Naive thymus-derived CD4-positive, alpha-beta T cell (primary cell): ENCODE measurements at regions of chr11 and their contacts with region 1.

Region 1: DNA sequence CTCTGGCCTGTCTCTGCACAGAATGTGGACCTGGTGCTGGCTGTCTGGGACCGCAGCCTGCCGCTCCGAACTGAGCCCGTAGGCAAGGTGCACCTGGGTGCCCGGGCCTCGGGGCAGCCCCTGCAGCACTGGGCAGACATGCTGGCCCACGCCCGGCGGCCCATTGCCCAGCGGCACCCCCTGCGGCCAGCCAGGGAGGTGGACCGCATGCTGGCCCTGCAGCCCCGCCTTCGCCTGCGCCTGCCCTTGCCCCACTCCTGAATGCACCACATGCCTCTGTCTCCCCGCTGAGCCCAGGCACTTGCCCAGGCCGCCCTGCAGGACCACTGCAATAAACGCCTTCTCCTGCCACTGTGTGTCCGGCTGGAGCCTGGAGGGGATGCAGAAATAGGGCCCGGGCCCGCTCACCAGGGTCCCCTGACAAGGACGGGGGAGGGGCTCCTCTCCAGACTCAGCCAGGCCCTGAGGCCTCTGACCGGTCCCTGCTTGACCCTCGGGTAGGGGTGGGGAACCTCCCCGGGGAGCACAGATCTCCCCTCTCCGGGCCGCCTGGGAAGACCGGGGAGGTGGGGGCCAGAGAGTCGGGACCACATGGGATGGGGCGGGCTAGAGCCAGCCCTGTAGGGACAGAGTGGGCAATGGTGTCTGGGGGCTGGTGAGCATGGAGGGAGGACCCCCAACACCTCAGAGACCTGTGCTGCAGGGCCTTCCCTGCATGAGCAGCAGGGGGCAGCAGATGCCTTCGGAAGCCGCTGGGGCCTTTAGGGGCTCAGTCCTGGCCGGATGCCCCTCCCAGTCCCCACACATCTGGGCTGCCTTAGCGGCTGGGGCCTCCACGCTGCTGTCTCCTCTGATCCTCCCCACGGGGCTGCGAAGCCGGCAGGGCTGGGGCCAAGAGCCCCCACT is 1.4 kb upstream of the TNNI2 start:
- DNase-seq: peak; percentile 53 to 83 (median 75)
- ATAC-seq: peak; percentile 84
- H3K4me3 ChIP-seq: no peak overlapping the region
- H3K4me3 Mint-ChIP-seq: peak overlapping the region in 1 of 10 donors; percentile 14
- H3K27ac ChIP-seq: no peak overlapping the region
- H3K27ac Mint-ChIP-seq: peak overlapping the region in 1 of 9 donors; percentile 19
- H3K4me1 ChIP-seq: peaks cover 0 to 7% of the 10 kb centered on the region in 2 donors
- H3K4me1 Mint-ChIP-seq: peaks cover 0 to 11% (median 7%) of the 10 kb centered on the region in 7 donors
- H3K27me3 ChIP-seq: no peaks in the 10 kb centered on the region
- H3K27me3 Mint-ChIP-seq: peaks cover 0 to 3% (median 0%) of the 10 kb centered on the region in 5 donors

Region 2: GRCh38 chr11:1652771-1653540 is 184.5 kb before region 1 on chr11:
- CTCF ChIA-PET with region 1: interaction called, 37 read pairs
- POLR2A ChIA-PET with region 1: no interaction called
- intact Hi-C with region 1: loop called in 1 of 2 experiments (anchors 1 kb)
- DNase-seq: peak; percentile 54 to 87 (median 78)
- ATAC-seq: peak; percentile 93
- H3K4me3 ChIP-seq: no peak overlapping the region
- H3K4me3 Mint-ChIP-seq: no peak overlapping the region
- H3K27ac ChIP-seq: no peak overlapping the region
- H3K27ac Mint-ChIP-seq: no peak overlapping the region
- H3K4me1 ChIP-seq: no peaks in the 10 kb centered on the region
- H3K4me1 Mint-ChIP-seq: peaks cover 0 to 4% (median 0%) of the 10 kb centered on the region in 7 donors
- H3K27me3 ChIP-seq: no peaks in the 10 kb centered on the region
- H3K27me3 Mint-ChIP-seq: peaks cover 0 to 19% (median 16%) of the 10 kb centered on the region in 5 donors

Region 3: DNA sequence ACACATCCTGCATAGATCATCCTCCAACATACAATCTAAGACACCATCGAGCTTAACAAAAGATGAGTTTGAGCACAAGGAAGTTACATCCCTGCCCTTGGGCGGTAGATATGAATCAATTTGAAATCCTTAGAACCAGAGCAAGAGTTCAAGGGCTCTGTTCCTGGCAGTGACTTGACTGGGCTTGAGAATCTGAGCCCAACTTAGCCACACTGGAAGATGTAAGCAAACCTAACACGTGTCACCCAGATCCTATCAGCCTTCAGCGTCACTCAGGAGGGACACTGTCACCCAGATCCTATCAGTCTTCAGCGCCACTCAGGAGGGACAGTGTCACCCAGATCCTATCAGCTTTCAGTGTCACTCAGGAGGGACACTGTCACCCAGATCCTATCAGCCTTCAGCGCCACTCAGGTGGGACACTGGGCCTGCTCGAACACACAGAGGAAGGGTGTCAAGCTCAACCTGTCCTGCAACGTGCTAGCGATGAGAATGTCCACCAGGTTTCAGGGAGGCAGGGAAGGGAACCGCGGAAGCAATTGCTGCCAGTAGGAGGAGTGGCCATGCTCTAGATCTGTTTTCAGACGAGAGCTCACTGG is 40.9 kb before region 1 on chr11:
- CTCF ChIA-PET with region 1: no interaction called
- POLR2A ChIA-PET with region 1: no interaction called
- intact Hi-C with region 1: no loop called
- DNase-seq: no peak
- ATAC-seq: no peak
- H3K4me3 ChIP-seq: no peak overlapping the region
- H3K4me3 Mint-ChIP-seq: no peak overlapping the region
- H3K27ac ChIP-seq: no peak overlapping the region
- H3K27ac Mint-ChIP-seq: no peak overlapping the region
- H3K4me1 ChIP-seq: no peaks in the 10 kb centered on the region
- H3K4me1 Mint-ChIP-seq: peaks cover 0 to 11% (median 5%) of the 10 kb centered on the region in 7 donors
- H3K27me3 ChIP-seq: no peaks in the 10 kb centered on the region
- H3K27me3 Mint-ChIP-seq: peaks cover 0 to 32% (median 14%) of the 10 kb centered on the region in 5 donors

Region 4: DNA sequence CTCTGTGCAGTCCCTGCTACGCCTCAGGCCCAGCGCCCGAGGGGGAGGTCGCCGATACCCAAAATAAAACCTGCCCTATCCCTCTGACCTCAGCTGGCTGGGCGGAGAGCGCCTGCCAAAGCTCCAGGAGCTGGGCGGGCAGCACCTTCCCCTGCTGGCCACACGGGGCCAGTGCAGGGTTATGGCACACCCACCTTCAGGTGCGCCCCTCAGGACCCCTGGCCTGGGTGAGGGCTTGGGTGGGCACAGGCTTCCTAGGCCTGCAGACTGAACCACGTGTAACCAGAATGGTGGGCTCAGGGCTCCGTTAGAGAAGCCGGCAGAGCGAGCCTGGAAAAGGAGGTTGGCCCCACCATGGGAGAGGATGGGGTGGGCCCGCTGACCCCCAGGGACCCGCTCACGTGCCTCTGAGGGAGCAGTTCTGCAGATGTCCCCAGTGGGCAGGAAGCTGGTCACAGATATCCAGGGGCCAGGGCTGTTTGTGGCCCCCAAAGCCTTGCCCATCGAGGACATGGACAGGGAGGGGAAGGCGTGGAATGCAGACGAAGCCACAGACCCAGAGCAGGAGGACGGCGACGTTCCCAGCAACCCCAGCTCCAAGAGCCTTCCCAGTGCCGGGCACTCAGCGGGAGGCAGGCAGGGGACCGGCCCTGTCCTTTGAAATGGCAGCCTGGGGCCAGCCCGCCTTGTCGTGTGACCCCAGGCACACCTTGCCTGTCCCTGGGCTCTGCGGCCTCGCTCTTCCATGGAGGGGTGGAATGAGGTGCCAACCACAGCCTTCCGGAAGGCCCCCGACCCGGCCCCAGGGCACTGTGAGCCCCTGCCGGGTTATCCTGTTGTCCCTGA is 80.5 kb after region 1 on chr11:
- CTCF ChIA-PET with region 1: interaction called, 4 read pairs
- POLR2A ChIA-PET with region 1: no interaction called
- intact Hi-C with region 1: loop called in 1 of 2 experiments (anchors 1 kb)
- DNase-seq: peak in 1 of 9 donors; percentile 19
- ATAC-seq: peak; percentile 50
- H3K4me3 ChIP-seq: no peak overlapping the region
- H3K4me3 Mint-ChIP-seq: no peak overlapping the region
- H3K27ac ChIP-seq: no peak overlapping the region
- H3K27ac Mint-ChIP-seq: peak overlapping the region in 1 of 9 donors; percentile 5
- H3K4me1 ChIP-seq: no peaks in the 10 kb centered on the region
- H3K4me1 Mint-ChIP-seq: peaks cover 9 to 32% (median 15%) of the 10 kb centered on the region in 7 donors
- H3K27me3 ChIP-seq: no peaks in the 10 kb centered on the region
- H3K27me3 Mint-ChIP-seq: peaks cover 0 to 15% (median 11%) of the 10 kb centered on the region in 5 donors